WTC11 (cell line): ENCODE measurements at regions of chr2 and their contacts with region 1.

Region 1: DNA sequence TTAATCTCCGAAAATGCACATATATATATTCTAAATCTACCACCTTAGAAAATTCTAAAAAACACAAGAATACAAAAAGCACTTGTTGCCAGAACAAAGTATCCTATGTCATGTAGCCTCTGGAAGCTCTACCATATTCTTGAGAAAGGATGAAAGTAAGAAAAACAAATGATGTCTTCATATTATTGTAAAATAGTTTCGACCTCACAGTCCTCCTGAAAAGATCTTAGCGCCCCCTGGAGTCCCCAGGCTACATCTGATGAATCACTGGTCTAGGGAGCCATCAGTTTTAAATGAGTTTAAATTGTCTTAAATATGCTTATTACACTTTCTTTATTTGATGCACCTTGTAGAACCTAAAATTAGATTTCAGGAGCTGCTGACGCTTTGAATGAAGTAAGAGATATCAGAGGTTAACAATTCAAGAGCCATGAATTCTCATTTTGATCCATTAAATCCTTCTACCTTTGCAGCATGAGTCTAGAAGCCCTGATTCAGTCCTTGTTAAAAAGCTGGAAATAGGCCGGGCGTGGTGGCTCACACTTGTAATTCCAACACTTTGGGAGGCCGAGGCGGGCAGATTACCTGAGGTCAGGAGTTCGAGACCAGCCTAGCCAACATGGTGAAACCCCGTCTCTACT is 138.8 kb downstream of the MCFD2 start:
- DNase-seq: peak; percentile 68
- ATAC-seq: 0 out of 2 replicates have a peak, but pooled peaks have one; percentile 14
- H3K4me3 Mint-ChIP-seq: no peak overlapping the region
- H3K27ac Mint-ChIP-seq: no peak overlapping the region
- H3K4me1 Mint-ChIP-seq: peaks cover 5% of the 10 kb centered on the region
- H3K27me3 Mint-ChIP-seq: no peaks in the 10 kb centered on the region
- CTCF ChIP-seq: no peak; the same call in 1 of the 2 replicates

Region 2: GRCh38 chr2:46651363-46652099 is 125.3 kb before region 1 on chr2:
- CTCF ChIA-PET with region 1: interaction called, 118 read pairs
- POLR2A ChIA-PET with region 1: interaction called, 6 read pairs
- DNase-seq: no peak
- ATAC-seq: no peak
- H3K4me3 Mint-ChIP-seq: no peak overlapping the region
- H3K27ac Mint-ChIP-seq: no peak overlapping the region
- H3K4me1 Mint-ChIP-seq: 0 out of 2 replicates have a peak, but pooled peaks cover 4% of the 10 kb centered on the region
- H3K27me3 Mint-ChIP-seq: no peaks in the 10 kb centered on the region
- CTCF ChIP-seq: no peak

Region 3: GRCh38 chr2:46657042-46657504 is 119.7 kb before region 1 on chr2:
- CTCF ChIA-PET with region 1: interaction called, 118 read pairs
- POLR2A ChIA-PET with region 1: interaction called, 6 read pairs
- DNase-seq: no peak
- ATAC-seq: peak; percentile 88
- H3K4me3 Mint-ChIP-seq: no peak overlapping the region
- H3K27ac Mint-ChIP-seq: no peak overlapping the region
- H3K4me1 Mint-ChIP-seq: 0 out of 2 replicates have a peak, but pooled peaks cover 2% of the 10 kb centered on the region
- H3K27me3 Mint-ChIP-seq: no peaks in the 10 kb centered on the region; the same call in 1 of the 2 replicates
- CTCF ChIP-seq: no peak; the same call in 1 of the 2 replicates

Region 4: GRCh38 chr2:46800218-46800964 is 23.6 kb after region 1 on chr2:
- CTCF ChIA-PET with region 1: interaction called, 11 read pairs
- POLR2A ChIA-PET with region 1: no interaction called
- DNase-seq: no peak
- ATAC-seq: no peak
- H3K4me3 Mint-ChIP-seq: no peak overlapping the region
- H3K27ac Mint-ChIP-seq: no peak overlapping the region
- H3K4me1 Mint-ChIP-seq: no peaks in the 10 kb centered on the region
- H3K27me3 Mint-ChIP-seq: no peaks in the 10 kb centered on the region
- CTCF ChIP-seq: no peak

Region 5: DNA sequence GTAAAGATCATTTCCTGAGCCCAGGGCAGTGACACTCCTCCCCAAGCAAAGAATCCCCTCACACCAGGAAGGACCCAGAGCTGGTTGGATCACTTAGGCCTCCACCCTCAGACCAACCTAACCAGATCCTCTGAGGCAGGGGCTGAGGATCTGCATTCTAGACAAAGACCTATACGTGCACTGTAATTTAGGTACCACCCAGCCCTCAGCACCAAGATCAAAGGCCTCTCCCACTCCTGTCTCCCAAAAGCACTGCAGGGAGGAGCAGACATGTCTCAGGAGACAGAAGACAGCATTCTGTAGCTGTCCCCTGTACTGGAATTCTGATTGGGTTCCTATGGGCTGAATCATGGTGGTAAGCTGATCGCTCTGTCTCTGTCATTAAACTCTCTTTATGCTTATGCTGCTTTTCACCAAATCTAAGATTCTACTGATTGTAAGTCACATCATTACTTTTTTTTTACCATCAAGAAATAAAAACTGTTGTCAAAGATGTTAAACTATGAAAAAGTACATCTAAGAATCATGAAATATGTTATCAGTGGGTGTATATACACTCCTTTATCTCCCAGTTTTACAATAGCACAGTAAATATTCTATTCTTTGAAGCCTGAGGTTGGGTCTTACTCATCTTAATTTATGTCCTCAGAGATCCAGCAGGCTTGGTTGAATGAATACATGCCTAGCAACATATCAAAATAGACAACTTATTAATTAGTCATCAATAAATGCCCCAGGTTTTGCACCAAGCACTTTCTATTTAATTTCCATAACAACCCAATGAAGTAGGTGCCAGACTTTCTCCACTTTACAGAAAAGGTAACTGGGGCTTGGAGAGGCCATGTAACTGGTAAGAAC is 110.5 kb after region 1 on chr2:
- CTCF ChIA-PET with region 1: interaction called, 10 read pairs
- POLR2A ChIA-PET with region 1: no interaction called
- DNase-seq: no peak
- ATAC-seq: no peak
- H3K4me3 Mint-ChIP-seq: no peak overlapping the region
- H3K27ac Mint-ChIP-seq: no peak overlapping the region
- H3K4me1 Mint-ChIP-seq: peaks cover 10% of the 10 kb centered on the region
- H3K27me3 Mint-ChIP-seq: no peaks in the 10 kb centered on the region; the same call in 1 of the 2 replicates
- CTCF ChIP-seq: no peak

Region 6: GRCh38 chr2:46915811-46916630 is 139.2 kb after region 1 on chr2:
- CTCF ChIA-PET with region 1: no interaction called
- POLR2A ChIA-PET with region 1: no interaction called
- DNase-seq: peak; percentile 80
- ATAC-seq: peak; percentile 76
- H3K4me3 Mint-ChIP-seq: peak overlapping the region; percentile 90
- H3K27ac Mint-ChIP-seq: peak overlapping the region; percentile 88
- H3K4me1 Mint-ChIP-seq: peaks cover 25% of the 10 kb centered on the region
- H3K27me3 Mint-ChIP-seq: no peaks in the 10 kb centered on the region
- CTCF ChIP-seq: no peak

Region 7: DNA sequence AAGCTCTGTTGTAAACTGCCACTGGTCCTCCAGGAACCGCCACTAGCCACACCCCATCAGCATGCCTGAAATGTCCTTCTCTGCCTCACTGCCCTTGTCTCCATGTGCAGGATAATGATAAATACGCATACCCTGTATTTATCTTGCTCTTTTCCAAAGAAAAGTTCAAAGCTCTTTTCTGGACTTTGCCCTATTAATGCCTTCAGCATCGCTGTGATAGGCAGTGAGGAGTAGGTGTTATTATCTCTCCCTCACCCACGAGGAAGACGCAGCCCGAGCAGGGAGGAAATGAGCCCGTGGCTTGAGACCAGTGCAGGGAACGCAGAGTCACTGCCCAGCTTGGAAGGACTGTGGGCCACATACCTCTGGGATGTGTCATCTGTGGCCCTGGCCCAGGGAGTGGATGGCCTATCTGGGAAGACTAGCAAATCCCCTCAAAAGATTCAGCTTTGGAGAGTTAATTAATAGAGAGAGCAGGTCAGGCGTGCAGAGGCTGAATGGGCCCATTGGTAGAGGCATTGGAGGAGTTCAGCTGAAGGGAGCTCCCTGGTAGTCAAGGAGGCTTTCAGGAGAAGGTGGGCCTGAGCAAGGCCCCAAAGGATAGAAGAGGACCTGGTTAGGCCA is 178.3 kb after region 1 on chr2:
- CTCF ChIA-PET with region 1: no interaction called
- POLR2A ChIA-PET with region 1: no interaction called
- DNase-seq: no peak
- ATAC-seq: no peak
- H3K4me3 Mint-ChIP-seq: no peak overlapping the region
- H3K27ac Mint-ChIP-seq: 0 out of 2 replicates have a peak overlapping the region, but pooled peaks have one; percentile 41
- H3K4me1 Mint-ChIP-seq: peaks cover 13% of the 10 kb centered on the region
- H3K27me3 Mint-ChIP-seq: no peaks in the 10 kb centered on the region
- CTCF ChIP-seq: no peak